Panc1 (cell line): ENCODE measurements at regions of chr12 and their contacts with region 1.

Region 1: GRCh38 chr12:110776410-110776809 is 33.7 kb upstream of the PPP1CC start:
- DNase-seq: no peak
- ATAC-seq: no peak
- H3K4me3 ChIP-seq: no peak overlapping the region
- H3K27ac ChIP-seq: no peak overlapping the region
- H3K4me1 ChIP-seq: no peaks in the 10 kb centered on the region
- H3K27me3 ChIP-seq: no peaks in the 10 kb centered on the region
- CTCF ChIP-seq: no peak

Region 2: DNA sequence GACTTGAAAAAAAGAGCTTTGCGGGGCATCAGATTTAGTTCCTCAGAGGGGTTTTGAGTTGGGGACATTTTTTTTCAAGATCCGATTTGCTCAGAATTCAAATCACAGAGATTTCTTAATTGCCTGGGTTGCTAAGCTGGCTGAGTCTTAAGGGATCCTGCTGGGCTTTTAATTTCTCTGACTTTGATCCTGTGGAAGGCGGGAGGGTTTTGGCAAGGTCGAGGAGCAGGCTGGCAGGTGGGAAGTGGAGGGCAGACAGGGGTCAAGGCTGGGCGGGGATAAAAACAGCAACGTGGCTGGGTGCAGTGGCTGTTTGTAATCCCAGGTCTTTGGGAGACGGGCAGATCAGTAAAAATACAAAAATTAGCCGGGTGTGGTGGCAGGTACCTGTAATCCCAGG is 36.9 kb after region 1 on chr12:
- CTCF ChIA-PET with region 1: interaction called, 13 read pairs
- POLR2A ChIA-PET with region 1: no interaction called
- in situ Hi-C with region 1: no loop called
- intact Hi-C with region 1: no loop called
- DNase-seq: no peak
- ATAC-seq: no peak
- H3K4me3 ChIP-seq: no peak overlapping the region
- H3K27ac ChIP-seq: no peak overlapping the region
- H3K4me1 ChIP-seq: no peaks in the 10 kb centered on the region
- H3K27me3 ChIP-seq: peaks cover 3% of the 10 kb centered on the region; the same call in 1 of the 2 replicates
- CTCF ChIP-seq: no peak

Region 3: GRCh38 chr12:110846615-110847566 is 70.5 kb after region 1 on chr12 and contains the start of gene CCDC63:
- CTCF ChIA-PET with region 1: interaction called, 10 read pairs
- POLR2A ChIA-PET with region 1: no interaction called
- in situ Hi-C with region 1: no loop called
- intact Hi-C with region 1: no loop called
- DNase-seq: no peak
- ATAC-seq: peak; percentile 95
- H3K4me3 ChIP-seq: peak within 1 kb of the TSS; percentile 70 to 76
- H3K27ac ChIP-seq: peak within 1 kb of the TSS; percentile 67
- H3K4me1 ChIP-seq: peaks cover 5% of the 10 kb centered on the region; the same call in 1 of the 2 replicates
- H3K27me3 ChIP-seq: no peaks in the 10 kb centered on the region
- CTCF ChIP-seq: peak; percentile 88
- total RNA-seq, gene CCDC63: not detected

Region 4: GRCh38 chr12:110957652-110958051 is 181.2 kb after region 1 on chr12:
- CTCF ChIA-PET with region 1: no interaction called
- POLR2A ChIA-PET with region 1: no interaction called
- in situ Hi-C with region 1: no loop called
- intact Hi-C with region 1: no loop called
- DNase-seq: no peak
- ATAC-seq: no peak
- H3K4me3 ChIP-seq: peak overlapping the region in 1 of 2 experiments; percentile 7; a peak in 1 of 4 replicates
- H3K27ac ChIP-seq: no peak overlapping the region
- H3K4me1 ChIP-seq: no peaks in the 10 kb centered on the region
- H3K27me3 ChIP-seq: peaks cover 16% of the 10 kb centered on the region
- CTCF ChIP-seq: no peak